Activated CD4-positive, alpha-beta T cell treated with anti-CD3 and anti-CD28 coated beads for 36 hours (primary cell): ENCODE measurements at regions of chr16 and their contacts with region 1.

Region 1: DNA sequence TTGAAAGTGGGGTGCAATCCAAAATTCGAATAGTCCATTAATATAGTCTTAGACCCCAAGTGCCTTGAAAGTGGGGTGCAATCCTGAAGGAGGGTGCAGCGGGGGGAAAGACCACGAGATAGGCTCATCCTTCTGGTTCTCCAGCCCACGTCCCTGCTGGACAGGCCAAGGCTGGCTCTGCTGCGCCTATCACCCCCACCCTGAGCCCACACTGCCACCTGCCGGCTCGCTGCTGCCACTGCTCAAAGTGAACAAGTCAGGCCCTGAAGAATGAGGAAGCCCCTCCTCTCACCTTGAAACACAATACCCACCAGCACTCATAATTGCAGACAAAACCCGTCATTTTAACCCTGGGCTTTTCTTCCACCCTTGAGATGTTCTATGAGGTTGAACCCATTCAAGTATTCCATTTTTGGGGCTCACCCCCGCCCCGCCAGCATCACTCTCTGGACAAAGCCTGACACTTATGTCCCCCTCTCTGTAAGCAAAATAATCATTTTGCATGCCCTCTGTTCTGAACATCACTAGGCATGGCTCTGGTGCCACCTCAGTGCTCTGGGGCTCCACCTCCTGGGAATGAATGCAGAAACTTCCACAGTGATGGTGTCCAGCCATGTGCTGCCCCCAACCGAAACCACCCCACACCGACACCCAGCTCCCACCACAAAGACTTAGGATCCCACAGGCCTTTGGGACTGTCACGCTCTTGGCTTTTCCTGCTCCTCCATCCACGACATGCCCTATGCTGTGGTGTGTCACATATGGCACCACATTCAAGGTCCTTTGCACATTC is 56.8 kb downstream of the BEAN1 start:
- DNase-seq: peak; percentile 89
- ATAC-seq: peak; percentile 77
- H3K4me3 Mint-ChIP-seq: no peak overlapping the region
- H3K27ac Mint-ChIP-seq: peak overlapping the region; percentile 55
- H3K4me1 Mint-ChIP-seq: peaks cover 18% of the 10 kb centered on the region
- H3K27me3 Mint-ChIP-seq: no peaks in the 10 kb centered on the region

Region 2: DNA sequence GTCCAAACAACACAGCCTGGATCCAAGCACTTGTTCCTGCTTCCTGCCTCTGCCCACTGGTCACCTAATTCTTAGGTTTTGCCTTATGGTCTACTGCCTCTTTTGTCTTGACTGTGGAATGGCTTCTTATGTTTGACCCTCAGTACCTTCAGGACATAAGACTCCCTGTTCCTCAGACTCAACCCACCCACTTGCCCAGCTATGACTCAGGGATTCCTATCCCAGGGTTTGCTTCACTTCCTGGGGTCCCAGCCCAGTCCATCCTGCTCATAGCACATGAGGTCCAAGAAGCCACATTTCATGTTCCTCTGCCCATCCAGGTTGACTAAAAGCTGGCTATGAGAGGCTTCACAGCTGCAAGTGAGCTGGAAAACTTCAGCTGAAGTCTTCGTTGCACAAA is 438.3 kb before region 1 on chr16:
- CTCF ChIA-PET with region 1: no interaction called
- POLR2A ChIA-PET with region 1: no interaction called
- intact Hi-C with region 1: no loop called
- DNase-seq: no peak
- ATAC-seq: no peak
- H3K4me3 Mint-ChIP-seq: no peak overlapping the region
- H3K27ac Mint-ChIP-seq: no peak overlapping the region
- H3K4me1 Mint-ChIP-seq: no peaks in the 10 kb centered on the region
- H3K27me3 Mint-ChIP-seq: peaks cover 12% of the 10 kb centered on the region

Region 3: DNA sequence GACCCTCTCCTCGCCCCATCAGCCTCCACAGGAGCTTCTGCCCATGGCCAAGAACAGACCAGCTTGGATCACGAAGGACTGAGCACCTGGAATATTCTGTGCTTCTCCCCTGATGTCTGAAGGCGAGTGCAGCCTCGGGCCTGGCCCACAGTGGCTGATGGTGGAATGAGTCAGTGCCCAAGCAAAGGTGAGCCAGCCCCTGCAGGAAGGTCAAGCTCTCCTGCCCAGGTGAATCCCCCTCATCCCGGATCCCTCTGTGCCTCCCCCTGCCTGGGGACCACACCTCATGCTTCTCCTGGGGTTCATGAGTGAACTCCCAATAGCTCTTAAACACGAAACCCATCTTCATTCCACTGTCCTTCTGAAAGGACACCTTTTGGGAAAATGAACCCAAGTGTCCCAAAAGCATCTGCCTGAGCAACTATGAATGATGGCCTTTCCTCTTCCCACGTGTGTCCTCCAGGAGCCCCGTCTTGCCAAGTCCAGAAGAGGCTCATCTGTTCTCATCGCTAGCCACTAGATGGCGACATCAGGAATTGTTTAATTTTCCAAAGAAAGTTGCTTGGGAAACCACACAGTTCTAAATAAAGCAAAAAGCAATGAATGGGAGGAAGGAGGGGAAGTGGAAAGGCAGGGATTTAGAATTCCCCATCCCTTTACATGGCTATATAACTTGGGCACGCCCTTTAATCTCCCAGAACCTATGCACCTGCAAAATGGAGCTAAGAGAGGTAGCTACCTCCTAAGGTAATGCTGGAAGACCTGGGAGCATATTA is 126.5 kb before region 1 on chr16:
- CTCF ChIA-PET with region 1: no interaction called
- POLR2A ChIA-PET with region 1: no interaction called
- intact Hi-C with region 1: loop called in 1 of 2 experiments (anchors 1 kb)
- DNase-seq: peak; percentile 42
- ATAC-seq: peak; percentile 39
- H3K4me3 Mint-ChIP-seq: no peak overlapping the region
- H3K27ac Mint-ChIP-seq: no peak overlapping the region
- H3K4me1 Mint-ChIP-seq: peaks cover 3% of the 10 kb centered on the region
- H3K27me3 Mint-ChIP-seq: peaks cover 31% of the 10 kb centered on the region

Region 4: DNA sequence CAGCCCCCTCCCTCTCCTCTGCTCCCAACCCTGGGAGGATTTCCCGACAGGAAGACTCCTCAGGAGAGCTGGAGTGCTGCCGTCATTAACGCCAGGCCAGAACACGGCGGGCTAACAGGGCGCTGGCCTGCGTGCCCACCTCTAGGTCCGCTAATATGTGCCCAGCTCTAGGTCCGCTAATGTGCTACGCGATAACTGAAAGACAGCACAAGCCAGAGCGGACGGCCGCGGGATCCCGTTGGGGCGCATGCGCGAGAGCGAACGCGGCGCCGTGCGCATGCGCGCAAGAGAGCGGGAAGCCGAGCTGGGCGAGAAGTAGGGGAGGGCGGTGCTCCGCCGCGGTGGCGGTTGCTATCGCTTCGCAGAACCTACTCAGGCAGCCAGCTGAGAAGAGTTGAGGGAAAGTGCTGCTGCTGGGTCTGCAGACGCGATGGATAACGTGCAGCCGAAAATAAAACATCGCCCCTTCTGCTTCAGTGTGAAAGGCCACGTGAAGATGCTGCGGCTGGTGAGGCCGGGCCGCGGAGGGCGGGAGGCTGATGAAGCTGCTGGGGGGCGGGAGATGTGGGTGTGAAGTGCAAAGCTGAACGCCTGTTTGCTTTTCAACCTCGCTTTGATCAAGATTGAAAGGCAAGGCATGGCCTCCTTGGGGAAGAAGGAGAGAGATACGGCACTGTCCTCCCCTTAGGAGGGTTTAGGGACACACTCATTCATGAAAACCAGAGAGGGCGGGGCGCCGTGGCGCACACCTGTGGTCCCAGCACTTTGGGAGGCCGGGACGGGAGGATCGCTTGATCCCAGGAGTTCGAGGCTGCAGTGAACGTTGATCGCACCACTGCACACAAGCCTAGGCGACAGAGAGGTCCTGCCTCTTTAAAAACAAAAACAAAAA is 68.6 kb after region 1 on chr16 and contains the start of gene CKLF:
- CTCF ChIA-PET with region 1: no interaction called
- POLR2A ChIA-PET with region 1: no interaction called
- intact Hi-C with region 1: loop called in 1 of 2 experiments (anchors 2 kb)
- DNase-seq: peak; percentile 94
- ATAC-seq: peak; percentile 73
- H3K4me3 Mint-ChIP-seq: peak within 1 kb of the TSS; percentile 97
- H3K27ac Mint-ChIP-seq: peak within 1 kb of the TSS; percentile 94
- H3K4me1 Mint-ChIP-seq: peaks cover 76% of the 10 kb centered on the region
- H3K27me3 Mint-ChIP-seq: no peaks in the 10 kb centered on the region
- total RNA-seq, gene CKLF: 93.5 to 122 TPM